Left lung (tissue), 14 donors: ENCODE measurements at regions of chr3 and their contacts with region 1.

Region 1: DNA sequence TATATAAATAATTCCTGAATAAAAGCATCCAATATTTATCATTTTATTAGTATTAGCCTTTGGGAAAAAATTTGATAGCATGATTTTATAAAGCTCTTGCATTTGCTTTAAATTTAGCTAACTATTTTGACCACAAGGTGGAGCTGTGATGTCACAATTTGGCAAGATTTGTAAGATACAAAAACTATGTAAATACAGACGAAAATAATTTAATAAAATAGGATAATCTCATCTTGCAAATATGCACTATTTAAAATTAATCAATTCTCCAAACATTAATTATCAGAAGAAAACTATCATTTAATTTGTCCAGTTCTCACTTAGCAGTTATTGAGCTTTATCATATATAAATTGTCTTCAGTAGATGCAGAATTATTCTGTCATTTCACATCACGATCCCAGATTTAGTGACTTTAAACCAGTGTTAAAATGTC is 95.4 kb downstream of the PLOD2 start:
- DNase-seq: peak in 2 of 4 donors; percentile 49 to 76
- ATAC-seq: peak; percentile 40
- H3K4me3 ChIP-seq: no peak overlapping the region
- H3K27ac ChIP-seq: no peak overlapping the region
- H3K4me1 ChIP-seq: no peaks in the 10 kb centered on the region
- H3K27me3 ChIP-seq: no peaks in the 10 kb centered on the region
- CTCF ChIP-seq: peak; percentile 59 to 69

Region 2: DNA sequence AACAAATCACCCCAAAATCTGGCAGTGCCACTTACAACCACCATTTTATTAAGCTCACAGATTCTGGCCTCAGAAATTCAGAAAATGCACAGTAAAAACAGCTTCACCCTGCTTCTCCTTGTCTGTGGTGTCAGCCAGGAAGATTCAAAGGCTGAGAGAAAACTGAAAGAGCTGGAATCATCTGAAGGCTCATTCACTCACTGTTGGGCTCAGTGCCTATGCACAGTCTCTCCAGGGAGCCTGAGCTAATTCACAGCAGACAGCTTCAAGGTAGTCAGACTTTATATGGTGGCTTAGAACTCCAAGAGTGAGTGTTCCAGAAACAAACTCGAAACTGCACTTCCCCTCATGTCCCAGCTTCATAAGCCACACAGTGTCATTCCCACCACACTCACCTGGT is 111.9 kb after region 1 on chr3:
- intact Hi-C with region 1: loop called in 1 of 2 experiments (anchors 10 kb)
- DNase-seq: no peak
- ATAC-seq: no peak
- H3K4me3 ChIP-seq: no peak overlapping the region
- H3K27ac ChIP-seq: no peak overlapping the region
- H3K4me1 ChIP-seq: no peaks in the 10 kb centered on the region
- H3K27me3 ChIP-seq: no peaks in the 10 kb centered on the region
- CTCF ChIP-seq: no peak

Region 3: GRCh38 chr3:146326670-146327543 is 261.3 kb after region 1 on chr3:
- intact Hi-C with region 1: loop called in 1 of 2 experiments (anchors 10 kb)
- DNase-seq: peak in 2 of 4 donors; percentile 53 to 80
- ATAC-seq: peak; percentile 89
- H3K4me3 ChIP-seq: no peak overlapping the region
- H3K27ac ChIP-seq: no peak overlapping the region
- H3K4me1 ChIP-seq: no peaks in the 10 kb centered on the region
- H3K27me3 ChIP-seq: no peaks in the 10 kb centered on the region
- CTCF ChIP-seq: peak; percentile 24 to 41